ENCODE measurements at regions of chr1 and their contacts with region 1.

Region 1: GRCh38 chr1:45521398-45522323 is at the start of gene PRDX1:
- DNase-seq: peak; percentile 96
- ATAC-seq: peak; percentile 84
- H3K4me3 Mint-ChIP-seq: peak within 1 kb of the TSS; percentile 94
- H3K27ac Mint-ChIP-seq: peak within 1 kb of the TSS; percentile 85
- H3K4me1 Mint-ChIP-seq: peaks cover 26% of the 10 kb centered on the region
- H3K27me3 Mint-ChIP-seq: peaks cover 13% of the 10 kb centered on the region
- total RNA-seq, gene PRDX1: 159 to 180 TPM

Region 2: GRCh38 chr1:45499415-45499769 is 22.3 kb before region 1 on chr1:
- POLR2A ChIA-PET with region 1: interaction called, 29 read pairs
- DNase-seq: no peak
- ATAC-seq: no peak
- H3K4me3 Mint-ChIP-seq: peak overlapping the region; percentile 94
- H3K27ac Mint-ChIP-seq: peak overlapping the region; percentile 94
- H3K4me1 Mint-ChIP-seq: peaks cover 24% of the 10 kb centered on the region
- H3K27me3 Mint-ChIP-seq: no peaks in the 10 kb centered on the region

Region 3: DNA sequence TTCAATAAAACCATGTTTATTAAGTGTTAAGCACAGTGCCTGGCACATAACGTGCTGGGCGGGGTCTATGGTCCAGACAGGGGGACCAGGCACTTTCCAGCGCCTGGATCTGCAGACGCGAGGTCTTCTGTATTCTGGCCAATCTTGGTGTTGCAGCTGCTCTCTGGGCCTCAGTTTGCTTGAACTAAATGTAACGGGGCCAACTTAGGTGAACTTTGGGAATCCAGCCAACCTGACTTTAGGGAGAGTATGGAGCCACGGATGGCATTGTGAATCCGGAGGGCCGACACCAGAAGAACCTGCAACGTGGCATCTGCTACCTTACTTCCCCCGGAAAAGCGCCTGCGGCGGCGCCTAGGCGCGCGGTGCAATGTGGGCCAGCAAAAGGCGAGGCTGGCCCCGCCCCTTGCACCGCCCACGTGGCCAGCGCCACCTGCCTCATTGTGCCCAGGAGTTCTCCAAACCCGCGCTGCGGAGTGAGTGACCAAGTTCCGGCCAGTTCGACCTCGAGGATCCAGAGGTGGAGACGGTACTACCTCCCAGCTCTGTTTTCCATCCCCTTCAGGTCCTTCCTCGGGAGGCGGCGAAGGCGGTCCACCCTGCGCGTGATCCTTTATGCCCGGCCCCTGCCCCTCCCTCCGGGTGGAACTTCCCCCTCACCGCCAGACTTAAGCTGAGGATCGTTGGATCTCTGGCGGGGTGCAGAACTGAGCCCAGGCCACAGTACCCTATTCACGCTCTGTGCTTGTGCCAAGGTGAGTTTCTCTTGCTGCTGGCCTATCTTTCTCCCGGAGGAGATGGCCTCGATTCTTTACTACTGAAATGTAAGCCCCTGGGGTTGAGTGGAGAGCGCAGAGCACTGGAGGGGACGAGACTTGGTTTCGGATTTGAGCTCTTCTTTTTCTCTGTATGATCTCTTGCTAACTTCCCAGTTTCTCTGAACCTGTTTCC is 29.0 kb after region 1 on chr1 and contains the start of gene AKR1A1:
- POLR2A ChIA-PET with region 1: interaction called, 64 read pairs
- DNase-seq: peak; percentile 94
- ATAC-seq: peak; percentile 92
- H3K4me3 Mint-ChIP-seq: peak within 1 kb of the TSS; percentile 94
- H3K27ac Mint-ChIP-seq: peak within 1 kb of the TSS; percentile 89
- H3K4me1 Mint-ChIP-seq: peaks cover 16% of the 10 kb centered on the region
- H3K27me3 Mint-ChIP-seq: peaks cover 8% of the 10 kb centered on the region
- total RNA-seq, gene AKR1A1: 102 to 116 TPM

Region 4: DNA sequence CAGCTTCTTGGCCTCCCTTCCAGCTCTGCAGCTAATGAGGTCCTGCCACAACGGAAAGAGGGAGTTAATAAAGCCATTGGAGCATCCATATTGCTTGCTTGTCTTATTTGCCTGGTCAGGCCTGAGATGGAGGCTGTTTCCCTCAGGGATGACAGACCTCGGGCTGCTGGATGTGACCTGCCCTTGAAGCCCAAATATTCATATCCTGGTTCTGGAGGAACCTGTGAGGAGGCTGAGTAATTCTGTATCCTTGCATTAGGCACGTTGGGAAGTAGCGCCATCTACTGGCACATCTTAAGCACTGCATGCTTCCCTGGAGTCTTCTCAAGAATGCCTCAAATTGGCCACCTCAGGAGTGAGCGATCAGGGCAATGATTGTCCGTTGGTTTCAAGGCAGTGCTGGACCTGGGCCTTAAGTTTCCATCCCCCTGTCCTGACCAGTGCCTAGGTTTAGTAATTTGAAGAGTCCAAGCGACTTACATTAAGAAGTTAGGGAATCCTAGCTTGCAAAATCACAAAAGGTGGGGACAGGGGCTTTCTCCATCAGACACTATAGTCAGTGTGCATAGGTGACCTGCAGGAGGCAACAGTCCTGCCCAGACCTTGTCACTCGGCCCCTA is 48.4 kb after region 1 on chr1:
- POLR2A ChIA-PET with region 1: interaction called, 20 read pairs
- DNase-seq: peak; percentile 63
- ATAC-seq: peak; percentile 79
- H3K4me3 Mint-ChIP-seq: no peak overlapping the region
- H3K27ac Mint-ChIP-seq: no peak overlapping the region
- H3K4me1 Mint-ChIP-seq: peaks cover 2% of the 10 kb centered on the region
- H3K27me3 Mint-ChIP-seq: no peaks in the 10 kb centered on the region

Measured in activated naive CD8-positive, alpha-beta T cell treated with anti-CD3 and anti-CD28 coated beads, Interleukin-2, amount 10 ng/mL, durations not matched to agents 7 days and 5 days (primary cell).